Adrenal gland (tissue), 19 donors: ENCODE measurements at regions of chr19 and their contacts with region 1.

Region 1: GRCh38 chr19:19488875-19489690 is 26.3 kb downstream of the TSSK6 start:
- DNase-seq: peak; percentile 73 to 96 (median 88)
- H3K4me3 ChIP-seq: peak overlapping the region in 1 of 4 donors; percentile 27
- H3K27ac ChIP-seq: peak overlapping the region; percentile 64 to 87 (median 82)
- H3K4me1 ChIP-seq: peaks cover 27 to 47% of the 10 kb centered on the region in 2 donors
- H3K27me3 ChIP-seq: no peaks in the 10 kb centered on the region
- CTCF ChIP-seq: no peak
- POLR2A ChIP-seq: peak in 1 of 2 donors; percentile 11

Region 2: DNA sequence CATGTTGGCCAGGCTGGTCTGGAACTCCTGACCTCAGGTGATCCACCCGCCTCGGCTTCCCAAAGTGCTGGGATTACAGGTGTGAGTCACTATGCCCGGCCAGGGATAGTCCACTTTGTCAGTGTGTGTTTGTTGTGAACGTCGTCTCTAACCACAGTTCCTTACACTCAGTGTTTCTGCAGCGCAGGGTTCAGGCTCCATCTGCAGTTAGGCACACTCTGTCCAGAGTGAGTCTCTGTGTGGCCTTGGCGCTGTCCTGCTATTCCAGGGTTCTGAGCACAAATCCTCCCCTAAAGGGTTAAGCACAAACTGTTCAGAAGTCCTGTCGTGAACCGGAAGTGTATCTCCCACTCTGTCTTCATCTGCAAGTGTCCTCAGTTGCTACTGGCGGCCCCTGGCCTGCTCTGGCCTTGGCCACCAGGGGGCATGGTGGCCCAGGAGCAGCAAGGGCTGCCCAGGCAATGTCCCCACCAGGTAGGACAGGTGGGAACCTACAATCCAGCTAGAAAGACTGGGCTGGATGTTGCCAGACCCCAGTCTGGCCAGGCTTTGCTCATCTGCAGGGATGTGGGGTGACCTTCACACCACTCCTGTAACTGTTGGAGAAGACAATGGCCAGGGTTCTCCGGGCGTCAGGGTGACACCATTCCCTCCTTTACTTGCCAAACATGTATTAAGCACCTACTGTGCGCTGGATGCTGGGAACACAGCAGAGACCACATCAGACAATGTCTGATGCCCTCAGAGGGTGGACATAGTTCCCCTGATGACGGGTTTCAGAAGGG is 122.3 kb before region 1 on chr19:
- intact Hi-C with region 1: loop called (anchors 2 to 5 kb)
- DNase-seq: peak; percentile 59 to 89 (median 77)
- H3K4me3 ChIP-seq: no peak overlapping the region
- H3K27ac ChIP-seq: peak overlapping the region in 1 of 5 donors; percentile 24
- H3K4me1 ChIP-seq: peaks cover 0 to 5% of the 10 kb centered on the region in 2 donors
- H3K27me3 ChIP-seq: no peaks in the 10 kb centered on the region
- CTCF ChIP-seq: peak; percentile 87 to 97 (median 96)
- POLR2A ChIP-seq: no peak

Region 3: DNA sequence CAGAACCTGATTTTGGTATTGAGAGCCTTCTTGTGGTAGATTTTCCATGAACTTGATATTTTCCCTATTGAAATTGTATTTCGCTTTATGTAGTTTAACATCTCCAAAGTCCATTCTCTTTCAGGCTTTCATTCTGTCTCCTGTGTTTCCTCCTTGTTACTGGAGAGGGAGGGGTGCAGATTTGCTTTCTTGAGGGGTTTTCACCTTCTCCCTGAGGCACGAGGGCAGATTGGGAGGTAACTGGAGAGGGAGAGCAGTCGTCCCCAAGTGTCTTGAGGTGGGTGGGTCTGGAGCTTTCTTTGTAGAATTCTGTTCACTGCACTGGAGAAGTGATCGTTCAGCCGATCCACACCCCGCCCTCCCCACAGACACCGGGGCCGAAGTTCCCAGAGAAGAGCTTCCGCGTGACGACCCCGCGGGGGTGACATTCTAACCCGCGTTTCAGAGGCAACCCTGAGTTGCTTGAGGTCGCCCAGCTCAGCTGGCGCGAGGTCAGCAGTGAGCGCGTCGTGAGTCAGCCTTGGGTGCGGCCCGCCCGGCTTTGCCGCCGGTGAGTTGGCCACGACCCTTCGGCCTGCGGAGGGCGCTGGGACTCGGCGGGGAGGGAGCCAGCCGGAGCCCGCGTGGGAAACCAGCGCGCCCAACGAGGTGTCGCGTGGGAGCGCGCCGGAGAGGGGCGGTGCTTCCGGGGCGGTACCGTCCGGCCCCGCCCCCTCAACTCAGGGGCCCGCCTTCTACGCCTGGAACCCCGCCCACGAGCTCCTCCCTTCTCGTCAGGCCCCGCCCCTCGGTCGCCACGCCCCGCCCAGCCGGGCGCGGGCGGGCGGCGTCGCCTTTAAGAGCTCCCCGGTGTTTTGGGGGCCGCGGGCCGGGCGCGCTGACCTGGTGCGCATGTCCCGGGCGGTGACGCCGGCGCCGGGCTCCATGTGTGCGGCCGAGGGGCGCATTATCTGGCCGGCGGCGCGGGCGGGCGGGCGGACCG is 83.9 kb before region 1 on chr19 and contains the start of gene GATAD2A:
- intact Hi-C with region 1: loop called in 1 of 2 experiments (anchors 5 kb)
- DNase-seq: peak; percentile 94 to 97 (median 95)
- H3K4me3 ChIP-seq: peak within 1 kb of the TSS; percentile 52 to 91 (median 86)
- H3K27ac ChIP-seq: peak within 1 kb of the TSS; percentile 63 to 94 (median 86)
- H3K4me1 ChIP-seq: peaks cover 38 to 55% of the 10 kb centered on the region in 2 donors
- H3K27me3 ChIP-seq: no peaks in the 10 kb centered on the region
- CTCF ChIP-seq: peak in 3 of 6 experiments; percentile 29 to 43 (median 38)
- POLR2A ChIP-seq: peak in 1 of 2 donors; percentile 51
- total RNA-seq, gene GATAD2A: 17.8 to 125 (median 65.3) TPM

Region 4: DNA sequence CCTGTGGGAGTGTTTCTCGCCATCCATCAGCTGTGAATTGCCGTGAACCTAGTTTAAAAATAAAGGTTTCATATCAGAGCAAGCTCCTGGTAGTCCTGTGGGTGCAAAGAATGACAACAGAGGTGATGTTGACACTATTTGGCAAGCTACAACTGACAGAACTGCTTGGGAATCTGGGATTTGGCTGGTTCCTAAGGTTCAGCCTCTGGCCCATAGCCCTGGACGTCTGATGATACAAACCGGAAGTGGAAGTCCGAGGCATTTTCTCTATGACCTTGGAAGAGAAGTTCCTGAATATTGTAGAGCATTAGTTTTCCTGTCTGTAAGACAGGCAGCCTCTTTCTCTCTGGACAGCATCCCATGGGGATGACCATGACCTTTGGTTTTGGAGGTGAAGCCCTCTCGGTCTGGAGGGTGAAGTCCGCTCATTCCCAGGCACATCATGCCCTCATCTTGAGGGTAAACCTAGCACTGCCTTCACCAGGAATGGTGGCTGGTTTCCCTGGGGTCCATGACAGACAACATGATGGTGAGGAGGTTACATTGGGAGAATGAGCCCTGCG is 54.5 kb before region 1 on chr19:
- intact Hi-C with region 1: no loop called
- DNase-seq: peak in 6 of 7 donors; percentile 63 to 85 (median 79)
- H3K4me3 ChIP-seq: no peak overlapping the region
- H3K27ac ChIP-seq: peak overlapping the region in 4 of 5 donors; percentile 19 to 87 (median 55)
- H3K4me1 ChIP-seq: peaks cover 12 to 18% of the 10 kb centered on the region in 2 donors
- H3K27me3 ChIP-seq: no peaks in the 10 kb centered on the region
- CTCF ChIP-seq: no peak
- POLR2A ChIP-seq: no peak

Region 5: DNA sequence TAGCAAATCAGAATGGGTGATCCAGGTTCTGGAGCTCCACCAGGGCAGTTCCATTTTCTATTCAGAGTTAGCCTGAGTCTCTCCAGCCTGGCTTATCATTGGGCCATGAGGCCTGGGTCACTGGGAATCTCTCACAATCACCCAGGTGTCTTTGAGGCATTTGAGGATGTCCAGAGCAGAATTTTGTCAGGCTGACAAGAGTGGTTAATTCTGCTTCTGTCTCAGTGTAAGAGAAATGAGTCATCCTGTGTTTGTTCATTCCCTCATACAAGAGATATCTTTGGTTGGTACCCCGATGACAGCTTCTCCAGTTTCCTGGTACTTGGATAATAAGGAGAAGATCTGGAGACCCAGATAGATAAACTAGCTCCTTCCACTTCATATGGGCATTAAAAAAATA is 422.1 kb after region 1 on chr19:
- intact Hi-C with region 1: no loop called
- DNase-seq: no peak
- H3K4me3 ChIP-seq: no peak overlapping the region
- H3K27ac ChIP-seq: no peak overlapping the region
- H3K4me1 ChIP-seq: no peaks in the 10 kb centered on the region
- H3K27me3 ChIP-seq: no peaks in the 10 kb centered on the region
- CTCF ChIP-seq: no peak
- POLR2A ChIP-seq: no peak